Adrenal gland (tissue), 19 donors: ENCODE measurements at regions of chr17 and their contacts with region 1.

Region 1: DNA sequence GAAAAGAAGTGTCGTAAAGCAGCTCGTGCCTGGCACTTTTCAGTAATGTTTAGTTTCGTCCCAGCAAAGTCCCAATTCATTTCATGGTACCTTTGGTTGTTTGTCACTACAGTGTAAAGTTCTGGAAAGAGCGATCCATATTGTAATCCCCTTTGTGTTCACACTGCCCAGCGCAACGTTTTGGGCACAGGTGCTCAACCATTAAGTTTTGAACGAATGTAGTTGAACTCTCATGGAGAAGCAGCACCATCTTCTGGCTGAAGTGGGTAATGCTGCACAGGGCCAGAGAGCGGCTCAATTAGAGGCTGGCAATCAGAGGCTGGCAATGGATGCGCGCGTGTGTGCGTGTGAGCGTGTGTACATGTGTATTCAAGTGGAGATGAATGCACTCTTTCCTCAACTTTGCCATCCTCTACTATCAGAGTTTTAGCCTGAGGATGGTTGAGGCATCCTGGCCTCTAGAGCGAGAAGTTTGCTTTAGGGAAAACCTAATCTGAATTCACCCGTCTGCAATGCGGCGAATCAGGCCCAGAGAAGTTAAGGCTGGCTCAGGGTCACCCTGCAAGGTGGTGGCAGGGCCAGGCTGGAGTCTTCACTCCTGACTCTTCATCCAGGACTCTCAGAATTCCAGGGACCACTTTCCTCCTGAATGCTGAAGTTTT is 29.9 kb downstream of the DYNLL2 start:
- DNase-seq: peak; percentile 66 to 94 (median 84)
- H3K4me3 ChIP-seq: no peak overlapping the region
- H3K27ac ChIP-seq: no peak overlapping the region
- H3K4me1 ChIP-seq: no peaks in the 10 kb centered on the region
- H3K27me3 ChIP-seq: no peaks in the 10 kb centered on the region
- CTCF ChIP-seq: peak; percentile 92 to 98 (median 96)
- POLR2A ChIP-seq: no peak

Region 2: DNA sequence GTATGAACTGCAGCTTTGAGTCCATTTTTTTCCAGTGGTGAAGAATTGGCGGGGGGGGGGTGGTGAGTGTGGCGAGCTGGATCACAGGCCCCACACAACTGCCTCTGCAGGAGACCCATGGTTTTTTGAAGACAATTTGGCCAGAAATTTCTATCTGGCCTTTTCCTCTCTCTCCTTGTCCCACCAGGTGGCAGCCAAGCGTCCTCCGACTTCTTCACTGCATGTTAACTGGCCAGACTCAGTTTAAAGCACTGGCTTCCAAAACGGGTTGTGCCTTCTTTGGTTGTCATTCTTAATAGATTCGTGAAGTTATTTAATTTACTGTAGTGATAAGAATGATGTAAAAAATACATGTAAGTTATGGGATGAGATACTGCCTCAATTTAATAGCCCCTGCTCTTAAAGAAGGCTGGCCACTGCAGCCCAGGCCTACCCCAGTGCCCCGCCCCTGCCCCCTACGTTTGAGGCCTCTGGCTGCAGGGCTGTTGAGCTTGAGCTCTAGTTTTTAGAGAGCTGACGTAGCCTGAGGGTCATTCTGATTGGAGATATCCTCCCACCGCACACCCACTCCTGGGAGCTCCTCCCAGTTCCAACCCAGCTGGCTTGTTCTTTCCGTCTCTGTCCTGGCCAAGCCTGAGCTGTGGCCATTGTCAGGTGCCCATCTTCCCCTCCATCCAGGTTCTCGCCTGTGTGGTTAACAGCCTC is 991.6 kb before region 1 on chr17:
- intact Hi-C with region 1: loop called in 1 of 2 experiments (anchors 10 kb)
- DNase-seq: peak; percentile 50 to 83 (median 73)
- H3K4me3 ChIP-seq: no peak overlapping the region
- H3K27ac ChIP-seq: peak overlapping the region in 1 of 5 donors; percentile 12
- H3K4me1 ChIP-seq: peaks cover 6 to 15% of the 10 kb centered on the region in 2 donors
- H3K27me3 ChIP-seq: no peaks in the 10 kb centered on the region
- CTCF ChIP-seq: peak; percentile 32 to 56 (median 50)
- POLR2A ChIP-seq: no peak

Region 3: DNA sequence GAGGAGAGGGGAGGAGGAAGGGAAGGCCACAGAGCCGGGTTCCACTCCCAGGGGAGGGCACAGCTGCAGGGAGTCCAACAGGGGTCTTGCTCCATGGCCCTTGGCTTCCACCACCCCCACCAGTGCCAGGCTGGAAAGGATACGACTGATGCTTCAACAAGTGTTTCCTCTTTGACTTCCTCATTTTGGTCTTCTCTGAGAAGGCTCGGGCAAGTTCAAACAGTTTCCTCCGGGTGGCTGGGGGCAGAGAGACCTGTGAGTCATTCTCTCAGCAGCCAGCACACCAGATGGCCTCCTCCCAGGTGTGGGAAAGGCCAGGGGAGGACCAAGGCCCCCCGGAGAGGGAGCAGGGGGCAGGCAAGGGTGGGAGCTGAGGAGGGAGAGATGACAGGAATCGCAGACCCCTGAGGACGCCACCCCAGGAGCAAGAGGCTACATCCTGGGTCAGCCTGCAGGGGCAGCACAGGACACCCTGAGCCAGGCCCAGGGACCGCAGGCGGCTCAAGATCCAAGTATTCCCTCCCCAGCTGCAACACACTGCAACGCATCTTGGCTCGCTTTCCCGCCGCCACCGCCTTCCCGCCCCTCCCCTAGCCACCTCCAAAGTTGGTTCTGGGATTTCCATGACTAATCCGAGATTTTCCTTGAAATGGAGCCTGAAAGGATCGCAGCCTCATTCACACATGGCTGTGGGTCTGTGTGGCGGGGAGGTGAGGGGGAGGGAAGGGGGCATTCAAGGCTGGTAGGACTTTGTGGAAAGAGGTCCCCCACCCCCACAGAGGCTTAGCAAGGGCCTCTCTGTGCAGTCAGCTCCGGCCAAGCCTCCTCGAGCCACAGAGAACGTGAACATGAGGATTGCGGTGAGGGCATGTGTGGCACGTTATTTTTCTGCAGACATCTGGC is 244.8 kb before region 1 on chr17:
- intact Hi-C with region 1: loop called in 1 of 2 experiments (anchors 10 kb)
- DNase-seq: peak; percentile 80 to 90 (median 87)
- H3K4me3 ChIP-seq: no peak overlapping the region
- H3K27ac ChIP-seq: peak overlapping the region; percentile 64 to 94 (median 88)
- H3K4me1 ChIP-seq: peaks cover 43 to 59% of the 10 kb centered on the region in 2 donors
- H3K27me3 ChIP-seq: no peaks in the 10 kb centered on the region
- CTCF ChIP-seq: peak in 5 of 6 experiments; percentile 44 to 68 (median 56)
- POLR2A ChIP-seq: peak in 1 of 2 donors; percentile 31

Region 4: GRCh38 chr17:58006924-58007780 is 105.9 kb before region 1 on chr17 and contains the start of gene SRSF1:
- intact Hi-C with region 1: loop called (anchors 5 to 10 kb)
- DNase-seq: peak; percentile 97 to 98 (median 97)
- H3K4me3 ChIP-seq: peak within 1 kb of the TSS; percentile 30 to 90 (median 83)
- H3K27ac ChIP-seq: peak within 1 kb of the TSS; percentile 89 to 99 (median 98)
- H3K4me1 ChIP-seq: peaks cover 12 to 47% of the 10 kb centered on the region in 2 donors
- H3K27me3 ChIP-seq: no peaks in the 10 kb centered on the region
- CTCF ChIP-seq: no peak
- POLR2A ChIP-seq: peak; percentile 84 to 95
- total RNA-seq, gene SRSF1: 131 to 236 (median 206) TPM

Region 5: DNA sequence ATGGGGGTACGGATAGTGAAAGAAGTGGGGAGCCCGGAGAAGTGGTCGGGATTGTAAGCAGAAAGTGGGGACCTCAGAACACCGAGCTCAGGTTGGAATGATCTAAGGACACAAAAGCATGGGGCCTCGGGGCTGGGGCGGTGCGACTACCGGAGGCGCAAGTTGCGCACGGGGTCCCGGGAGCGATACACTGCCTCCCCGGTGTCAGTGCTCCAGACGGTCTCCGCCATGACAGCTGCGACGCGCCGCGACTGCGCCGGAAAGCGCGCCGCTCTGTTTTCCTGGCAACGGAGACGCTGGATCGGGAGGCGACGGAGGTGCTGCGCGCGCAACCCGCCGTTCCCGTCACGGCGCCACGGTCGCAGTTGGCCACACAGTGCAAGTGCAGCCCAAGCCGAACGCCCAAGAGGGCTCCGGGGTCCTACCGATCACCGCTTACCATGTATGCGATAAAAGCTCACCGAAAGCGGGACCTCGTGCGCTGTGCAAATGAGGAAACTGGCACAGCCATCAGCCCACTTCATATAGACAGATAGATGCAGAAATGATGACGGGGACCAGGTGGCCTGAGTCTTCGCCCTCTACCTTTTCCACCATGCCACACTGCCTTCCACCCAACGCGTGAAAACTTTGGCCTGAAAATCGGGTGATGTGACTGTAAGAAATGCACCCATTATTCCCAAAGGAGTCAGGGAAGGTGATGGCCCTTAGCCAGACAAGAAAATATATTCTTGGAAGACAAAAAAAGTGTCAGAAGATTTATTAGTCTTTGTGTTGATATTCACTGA is 106.1 kb after region 1 on chr17 and contains the start of gene MKS1:
- intact Hi-C with region 1: no loop called
- DNase-seq: peak; percentile 94 to 98 (median 95)
- H3K4me3 ChIP-seq: peak within 1 kb of the TSS; percentile 21 to 81 (median 62)
- H3K27ac ChIP-seq: peak within 1 kb of the TSS in 3 of 5 donors; percentile 39 to 76 (median 60)
- H3K4me1 ChIP-seq: peaks cover 0 to 10% of the 10 kb centered on the region in 2 donors
- H3K27me3 ChIP-seq: no peaks in the 10 kb centered on the region
- CTCF ChIP-seq: peak; percentile 52 to 85 (median 74)
- POLR2A ChIP-seq: peak; percentile 16 to 65
- total RNA-seq, gene MKS1: 9.1 to 21.1 (median 14.8) TPM

Region 6: GRCh38 chr17:58303971-58304725 is 191.0 kb after region 1 on chr17:
- intact Hi-C with region 1: no loop called
- DNase-seq: peak in 5 of 7 donors; percentile 45 to 69 (median 61)
- H3K4me3 ChIP-seq: no peak overlapping the region
- H3K27ac ChIP-seq: no peak overlapping the region
- H3K4me1 ChIP-seq: no peaks in the 10 kb centered on the region
- H3K27me3 ChIP-seq: no peaks in the 10 kb centered on the region
- CTCF ChIP-seq: peak; percentile 61 to 74 (median 64)
- POLR2A ChIP-seq: no peak